Activated CD4-positive, alpha-beta memory T cell treated with anti-CD3 and anti-CD28 coated beads for 36 hours (primary cell): ENCODE measurements at regions of chr5 and their contacts with region 1.

Region 1: GRCh38 chr5:157718519-157718918 is 12.7 kb upstream of the THG1L start:
- DNase-seq: no peak
- H3K4me3 Mint-ChIP-seq: no peak overlapping the region
- H3K27ac Mint-ChIP-seq: no peak overlapping the region
- H3K4me1 Mint-ChIP-seq: peaks cover 21% of the 10 kb centered on the region
- H3K27me3 Mint-ChIP-seq: no peaks in the 10 kb centered on the region

Region 2: GRCh38 chr5:157328277-157328912 is 390.1 kb before region 1 on chr5:
- CTCF ChIA-PET with region 1: interaction called, 21 read pairs
- POLR2A ChIA-PET with region 1: no interaction called
- intact Hi-C with region 1: loop called (anchors 1 kb)
- DNase-seq: peak; percentile 71
- H3K4me3 Mint-ChIP-seq: no peak overlapping the region
- H3K27ac Mint-ChIP-seq: peak overlapping the region; percentile 23
- H3K4me1 Mint-ChIP-seq: peaks cover 40% of the 10 kb centered on the region
- H3K27me3 Mint-ChIP-seq: no peaks in the 10 kb centered on the region

Region 3: GRCh38 chr5:157431544-157432200 is 286.8 kb before region 1 on chr5:
- CTCF ChIA-PET with region 1: interaction called, 21 read pairs
- POLR2A ChIA-PET with region 1: no interaction called
- intact Hi-C with region 1: loop called (anchors 2 kb)
- DNase-seq: peak; percentile 30
- H3K4me3 Mint-ChIP-seq: no peak overlapping the region
- H3K27ac Mint-ChIP-seq: no peak overlapping the region
- H3K4me1 Mint-ChIP-seq: peaks cover 8% of the 10 kb centered on the region
- H3K27me3 Mint-ChIP-seq: peaks cover 1% of the 10 kb centered on the region

Region 4: DNA sequence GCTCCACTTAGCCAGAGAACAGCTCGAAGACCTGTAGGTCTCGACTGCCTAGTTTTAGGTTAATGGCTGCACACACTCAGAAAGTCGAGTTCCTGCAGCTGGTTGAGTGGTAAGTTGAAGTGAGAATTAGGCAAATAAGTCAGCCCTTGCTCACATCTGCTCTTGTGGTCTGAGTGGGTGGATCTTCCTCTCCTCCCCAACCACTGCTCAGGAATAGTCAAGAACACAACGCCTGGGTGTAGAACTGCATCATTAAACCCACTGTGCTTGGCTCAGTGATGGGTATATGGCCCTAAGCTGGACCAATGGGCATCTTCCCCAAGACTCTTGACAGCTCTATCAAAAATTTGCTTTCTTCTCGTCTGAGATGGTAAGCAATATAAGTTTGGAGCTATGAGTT is 122.0 kb before region 1 on chr5:
- CTCF ChIA-PET with region 1: interaction called, 3 read pairs
- POLR2A ChIA-PET with region 1: no interaction called
- intact Hi-C with region 1: loop called (anchors 10 kb)
- DNase-seq: peak; percentile 83
- H3K4me3 Mint-ChIP-seq: peak overlapping the region; percentile 11
- H3K27ac Mint-ChIP-seq: peak overlapping the region; percentile 91
- H3K4me1 Mint-ChIP-seq: peaks cover 95% of the 10 kb centered on the region
- H3K27me3 Mint-ChIP-seq: no peaks in the 10 kb centered on the region

Region 5: DNA sequence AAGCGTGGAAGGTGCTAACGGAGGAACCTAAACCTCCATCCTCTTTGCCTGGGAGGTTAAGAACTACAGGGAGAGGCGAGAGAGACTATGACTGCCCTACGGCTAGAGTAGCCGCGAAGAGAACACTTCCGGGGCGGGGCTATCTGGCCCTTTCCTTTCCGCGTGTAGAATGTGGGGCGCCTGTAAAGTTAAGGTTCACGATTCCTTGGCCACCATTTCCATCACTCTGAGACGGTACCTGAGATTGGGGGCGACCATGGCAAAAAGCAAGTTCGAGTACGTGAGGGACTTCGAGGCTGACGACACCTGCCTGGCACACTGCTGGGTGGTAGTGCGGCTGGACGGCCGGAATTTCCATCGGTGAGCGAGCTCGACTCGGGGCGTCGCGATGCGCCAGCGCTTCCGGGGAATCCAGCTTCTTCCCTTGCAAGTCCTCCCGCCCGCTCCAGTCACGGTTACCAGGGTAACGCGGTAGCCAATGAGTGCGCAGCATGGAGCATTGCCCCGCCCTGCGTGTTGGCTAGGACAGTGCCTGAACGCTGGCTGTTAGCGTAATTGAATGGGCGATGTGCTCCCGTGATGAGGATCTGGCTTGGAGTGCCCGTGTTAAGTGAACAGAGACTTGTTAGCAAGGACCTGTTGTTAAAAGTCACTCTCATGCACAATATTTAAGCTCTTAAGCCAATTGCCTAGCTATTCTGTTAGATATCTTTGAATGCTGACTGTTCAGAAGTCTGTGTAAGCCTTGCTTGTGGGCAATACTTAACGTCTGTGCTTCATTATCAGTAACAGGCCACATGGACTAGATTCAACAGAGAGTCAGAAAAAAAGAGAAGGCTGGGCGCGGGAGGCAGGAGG is 13.0 kb after region 1 on chr5 and contains the start of gene THG1L:
- CTCF ChIA-PET with region 1: interaction called, 13 read pairs
- POLR2A ChIA-PET with region 1: interaction called, 7 read pairs
- intact Hi-C with region 1: loop called (anchors 1 kb)
- DNase-seq: peak; percentile 100
- H3K4me3 Mint-ChIP-seq: peak within 1 kb of the TSS; percentile 95
- H3K27ac Mint-ChIP-seq: peak within 1 kb of the TSS; percentile 97
- H3K4me1 Mint-ChIP-seq: peaks cover 33% of the 10 kb centered on the region
- H3K27me3 Mint-ChIP-seq: no peaks in the 10 kb centered on the region
- total RNA-seq, gene THG1L: 28.6 to 33.5 TPM

Region 6: GRCh38 chr5:157756122-157756521 is 37.6 kb after region 1 on chr5:
- CTCF ChIA-PET with region 1: no interaction called
- POLR2A ChIA-PET with region 1: no interaction called
- intact Hi-C with region 1: no loop called
- DNase-seq: no peak
- H3K4me3 Mint-ChIP-seq: no peak overlapping the region
- H3K27ac Mint-ChIP-seq: no peak overlapping the region
- H3K4me1 Mint-ChIP-seq: peaks cover 13% of the 10 kb centered on the region
- H3K27me3 Mint-ChIP-seq: no peaks in the 10 kb centered on the region